Mammary epithelial cell (primary cell): ENCODE measurements at regions of chr12 and their contacts with region 1.

Region 1: GRCh38 chr12:90091021-90091651 is 382.5 kb upstream of the ATP2B1 start:
- DNase-seq: peak; percentile 98
- H3K4me3 ChIP-seq: peak overlapping the region in 1 of 3 experiments; percentile 25
- H3K27ac ChIP-seq: peak overlapping the region; percentile 96
- H3K4me1 ChIP-seq: peaks cover 17% of the 10 kb centered on the region
- H3K27me3 ChIP-seq: no peaks in the 10 kb centered on the region
- CTCF ChIP-seq: no peak

Region 2: GRCh38 chr12:90024287-90024686 is 66.8 kb before region 1 on chr12:
- CTCF ChIA-PET with region 1: no interaction called
- dilution Hi-C with region 1: no loop called
- in situ Hi-C with region 1: no loop called
- intact Hi-C with region 1: loop called (anchors 5 kb)
- DNase-seq: no peak
- H3K4me3 ChIP-seq: no peak overlapping the region
- H3K27ac ChIP-seq: no peak overlapping the region
- H3K4me1 ChIP-seq: peaks cover 19% of the 10 kb centered on the region
- H3K27me3 ChIP-seq: no peaks in the 10 kb centered on the region
- CTCF ChIP-seq: no peak